Endothelial cell of umbilical vein (primary cell): ENCODE measurements at regions of chr1 and their contacts with region 1.

Region 1: DNA sequence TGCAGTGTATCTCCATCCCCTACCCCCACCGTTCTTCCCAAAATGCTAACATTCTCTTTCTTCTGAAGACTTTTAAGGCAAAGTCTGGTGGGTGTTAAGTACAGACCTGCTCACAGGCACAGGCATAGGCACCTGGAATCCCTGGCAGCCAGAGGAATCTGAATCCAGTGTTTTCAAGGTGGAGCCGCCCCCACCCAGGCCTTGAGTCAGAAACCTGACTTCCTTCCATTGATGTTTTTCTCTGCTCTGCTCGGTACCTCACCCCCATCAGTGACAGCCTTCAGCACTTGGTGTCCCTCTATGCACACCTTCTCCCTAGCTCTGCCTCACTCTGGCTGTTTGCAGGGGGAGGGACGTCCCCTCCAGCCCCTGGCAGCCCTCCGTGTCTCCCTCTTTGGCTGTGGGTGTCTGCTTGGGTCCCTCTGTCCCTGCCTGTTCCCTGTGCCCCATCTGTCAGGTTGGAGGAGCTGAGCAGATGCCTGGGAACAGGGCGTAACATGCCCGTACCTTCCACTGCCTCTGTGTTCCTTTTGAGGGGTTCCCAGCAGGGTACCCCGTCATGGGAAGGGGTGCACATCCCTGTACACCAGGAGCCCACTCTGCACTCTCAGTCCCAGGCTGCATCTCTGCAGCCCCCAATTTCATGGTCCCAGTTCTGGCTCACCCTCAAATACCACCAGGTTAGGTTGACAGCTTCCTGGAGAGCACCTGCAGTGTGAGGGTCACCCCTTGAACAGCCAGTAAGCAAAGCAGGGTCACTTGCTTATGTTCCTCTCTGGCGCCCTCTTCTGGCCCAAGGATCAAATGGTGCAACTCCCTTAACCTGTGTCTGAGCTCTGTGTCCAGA is 6.7 kb downstream of the NCDN start:
- DNase-seq: peak; percentile 70
- H3K4me3 ChIP-seq: no peak overlapping the region
- H3K27ac ChIP-seq: no peak overlapping the region
- H3K4me1 ChIP-seq: no peaks in the 10 kb centered on the region
- H3K27me3 ChIP-seq: no peaks in the 10 kb centered on the region
- CTCF ChIP-seq: peak; percentile 72 to 84
- POLR2A ChIP-seq: no peak

Region 2: GRCh38 chr1:35443768-35444518 is 120.3 kb before region 1 on chr1:
- CTCF ChIA-PET with region 1: interaction called, 363 read pairs
- POLR2A ChIA-PET with region 1: no interaction called
- dilution Hi-C with region 1: no loop called
- intact Hi-C with region 1: no loop called
- DNase-seq: no peak
- H3K4me3 ChIP-seq: no peak overlapping the region
- H3K27ac ChIP-seq: no peak overlapping the region
- H3K4me1 ChIP-seq: peaks cover 7% of the 10 kb centered on the region
- H3K27me3 ChIP-seq: no peaks in the 10 kb centered on the region
- CTCF ChIP-seq: no peak
- POLR2A ChIP-seq: no peak

Region 3: DNA sequence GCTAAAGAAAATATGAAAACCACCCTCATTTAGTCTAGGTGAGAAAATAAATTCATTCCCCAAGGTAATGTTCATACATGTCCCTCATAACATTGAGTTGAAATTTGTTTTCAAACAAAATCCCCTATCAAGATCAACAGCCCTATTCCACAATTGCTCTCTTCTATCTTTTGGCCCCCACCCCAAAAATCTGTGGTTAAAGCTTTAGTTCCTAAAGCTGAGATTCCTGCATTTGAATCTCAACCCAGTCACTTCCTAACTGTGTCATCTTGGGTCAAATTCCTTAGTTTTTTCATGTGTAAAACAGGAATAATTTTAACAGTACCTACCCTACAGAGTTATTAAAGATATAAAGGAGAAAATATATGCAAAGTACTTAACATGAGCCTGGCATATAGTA is 29.0 kb before region 1 on chr1:
- CTCF ChIA-PET with region 1: interaction called, 10 read pairs
- POLR2A ChIA-PET with region 1: no interaction called
- dilution Hi-C with region 1: no loop called
- intact Hi-C with region 1: no loop called
- DNase-seq: no peak
- H3K4me3 ChIP-seq: no peak overlapping the region
- H3K27ac ChIP-seq: no peak overlapping the region
- H3K4me1 ChIP-seq: no peaks in the 10 kb centered on the region
- H3K27me3 ChIP-seq: no peaks in the 10 kb centered on the region
- CTCF ChIP-seq: no peak
- POLR2A ChIP-seq: no peak

Region 4: DNA sequence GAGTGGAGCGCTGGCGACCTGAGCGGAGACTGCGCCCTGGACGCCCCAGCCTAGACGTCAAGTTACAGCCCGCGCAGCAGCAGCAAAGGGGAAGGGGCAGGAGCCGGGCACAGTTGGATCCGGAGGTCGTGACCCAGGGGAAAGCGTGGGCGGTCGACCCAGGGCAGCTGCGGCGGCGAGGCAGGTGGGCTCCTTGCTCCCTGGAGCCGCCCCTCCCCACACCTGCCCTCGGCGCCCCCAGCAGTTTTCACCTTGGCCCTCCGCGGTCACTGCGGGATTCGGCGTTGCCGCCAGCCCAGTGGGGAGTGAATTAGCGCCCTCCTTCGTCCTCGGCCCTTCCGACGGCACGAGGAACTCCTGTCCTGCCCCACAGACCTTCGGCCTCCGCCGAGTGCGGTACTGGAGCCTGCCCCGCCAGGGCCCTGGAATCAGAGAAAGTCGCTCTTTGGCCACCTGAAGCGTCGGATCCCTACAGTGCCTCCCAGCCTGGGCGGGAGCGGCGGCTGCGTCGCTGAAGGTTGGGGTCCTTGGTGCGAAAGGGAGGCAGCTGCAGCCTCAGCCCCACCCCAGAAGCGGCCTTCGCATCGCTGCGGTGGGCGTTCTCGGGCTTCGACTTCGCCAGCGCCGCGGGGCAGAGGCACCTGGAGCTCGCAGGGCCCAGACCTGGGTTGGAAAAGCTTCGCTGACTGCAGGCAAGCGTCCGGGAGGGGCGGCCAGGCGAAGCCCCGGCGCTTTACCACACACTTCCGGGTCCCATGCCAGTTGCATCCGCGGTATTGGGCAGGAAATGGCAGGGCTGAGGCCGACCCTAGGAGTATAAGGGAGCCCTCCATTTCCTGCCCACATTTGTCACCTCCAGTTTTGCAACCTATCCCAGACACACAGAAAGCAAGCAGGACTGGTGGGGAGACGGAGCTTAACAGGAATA is 13.1 kb after region 1 on chr1:
- CTCF ChIA-PET with region 1: interaction called, 14 read pairs
- POLR2A ChIA-PET with region 1: no interaction called
- dilution Hi-C with region 1: no loop called
- intact Hi-C with region 1: no loop called
- DNase-seq: peak; percentile 37
- H3K4me3 ChIP-seq: peak overlapping the region in 1 of 3 experiments; percentile 9
- H3K27ac ChIP-seq: no peak overlapping the region
- H3K4me1 ChIP-seq: peaks cover 9% of the 10 kb centered on the region
- H3K27me3 ChIP-seq: peaks cover 30 to 52% of the 10 kb centered on the region in 2 experiments
- CTCF ChIP-seq: no peak
- POLR2A ChIP-seq: no peak

Region 5: GRCh38 chr1:35715568-35716002 is 151.3 kb after region 1 on chr1:
- CTCF ChIA-PET with region 1: interaction called, 57 read pairs
- POLR2A ChIA-PET with region 1: no interaction called
- dilution Hi-C with region 1: no loop called
- intact Hi-C with region 1: loop called (anchors 1 kb)
- DNase-seq: peak; percentile 65
- H3K4me3 ChIP-seq: no peak overlapping the region
- H3K27ac ChIP-seq: no peak overlapping the region
- H3K4me1 ChIP-seq: peaks cover 13% of the 10 kb centered on the region
- H3K27me3 ChIP-seq: no peaks in the 10 kb centered on the region
- CTCF ChIP-seq: peak; percentile 85 to 89
- POLR2A ChIP-seq: no peak

Region 6: GRCh38 chr1:35726450-35727433 is 162.5 kb after region 1 on chr1:
- CTCF ChIA-PET with region 1: interaction called, 133 read pairs
- POLR2A ChIA-PET with region 1: no interaction called
- dilution Hi-C with region 1: no loop called
- intact Hi-C with region 1: loop called (anchors 1 kb)
- DNase-seq: peak; percentile 66
- H3K4me3 ChIP-seq: no peak overlapping the region
- H3K27ac ChIP-seq: no peak overlapping the region
- H3K4me1 ChIP-seq: no peaks in the 10 kb centered on the region
- H3K27me3 ChIP-seq: no peaks in the 10 kb centered on the region
- CTCF ChIP-seq: peak; percentile 76 to 90
- POLR2A ChIP-seq: no peak

Region 7: GRCh38 chr1:35777109-35777508 is 212.8 kb after region 1 on chr1:
- CTCF ChIA-PET with region 1: interaction called, 41 read pairs
- POLR2A ChIA-PET with region 1: no interaction called
- dilution Hi-C with region 1: no loop called
- intact Hi-C with region 1: loop called (anchors 1 kb)
- DNase-seq: no peak
- H3K4me3 ChIP-seq: no peak overlapping the region
- H3K27ac ChIP-seq: no peak overlapping the region
- H3K4me1 ChIP-seq: no peaks in the 10 kb centered on the region
- H3K27me3 ChIP-seq: no peaks in the 10 kb centered on the region
- CTCF ChIP-seq: no peak
- POLR2A ChIP-seq: no peak